ENCODE measurements at regions of chr15 and their contacts with region 1.

Region 1: DNA sequence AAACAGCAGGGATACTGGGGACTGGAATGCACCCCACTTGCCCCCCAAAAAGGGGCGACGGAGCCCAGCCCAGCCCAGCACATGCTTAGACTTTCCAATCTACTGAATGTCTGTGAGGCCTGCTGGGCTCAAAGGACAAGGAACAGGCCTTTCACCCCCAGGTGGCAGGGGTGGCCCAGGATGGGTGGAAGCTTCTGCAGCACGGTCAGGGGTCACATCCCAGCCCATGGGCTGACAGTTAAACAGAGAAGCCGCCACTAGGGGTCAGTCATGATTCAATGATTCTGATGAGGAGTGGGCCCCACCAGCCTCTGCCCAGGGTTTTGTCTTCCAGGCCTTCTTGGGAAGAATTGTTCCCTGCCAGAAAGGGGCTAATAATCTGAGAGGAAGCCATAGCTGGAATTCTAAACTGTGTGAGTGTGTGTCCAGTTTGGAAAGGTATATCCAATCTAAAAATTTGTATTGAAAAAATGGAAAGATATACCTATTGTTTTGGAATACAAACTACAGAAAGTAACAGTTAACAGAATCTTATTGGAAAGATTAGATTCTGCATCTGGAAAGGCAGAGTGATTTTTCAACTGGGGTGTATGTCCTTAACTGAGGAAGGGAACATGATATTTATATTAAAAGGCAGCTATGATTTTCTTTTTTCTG is 2.2 kb downstream of the CHRNB4 start:
- DNase-seq: peak; percentile 82
- CTCF ChIP-seq: peak; percentile 50

Region 2: GRCh38 chr15:78714890-78715289 is 76.1 kb after region 1 on chr15:
- in situ Hi-C with region 1: loop called (anchors 10 kb)
- DNase-seq: no peak
- CTCF ChIP-seq: no peak